H1 (cell line): ENCODE measurements at regions of chr20 and their contacts with region 1.

Region 1: GRCh38 chr20:59403261-59403961 is 103.0 kb downstream of the EDN3 start:
- DNase-seq: peak; percentile 13 to 98
- H3K4me3 ChIP-seq: peak overlapping the region; percentile 27 to 63 (median 58)
- H3K27ac ChIP-seq: no peak overlapping the region
- H3K4me1 ChIP-seq: peaks cover 0 to 8% (median 2%) of the 10 kb centered on the region in 4 experiments; a peak in 5 of 7 replicates
- H3K27me3 ChIP-seq: peaks cover 0 to 22% (median 16%) of the 10 kb centered on the region in 4 experiments; a peak in 6 of 7 replicates
- CTCF ChIP-seq: peak; percentile 92 to 93 (median 93)
- EP300 ChIP-seq: no peak
- POLR2A ChIP-seq: no peak
- RAD21 ChIP-seq: peak; percentile 96 to 98

Region 2: GRCh38 chr20:59087829-59088433 is 315.5 kb before region 1 on chr20:
- CTCF ChIA-PET with region 1: interaction called, 10 read pairs
- POLR2A ChIA-PET with region 1: no interaction called
- DNase-seq: peak; percentile 43 to 92
- H3K4me3 ChIP-seq: no peak overlapping the region
- H3K27ac ChIP-seq: no peak overlapping the region
- H3K4me1 ChIP-seq: no peaks in the 10 kb centered on the region
- H3K27me3 ChIP-seq: 0 out of 7 replicates have a peak, but pooled peaks cover 0 to 2% (median 0%) of the 10 kb centered on the region in 4 experiments
- CTCF ChIP-seq: peak; percentile 78 to 89 (median 79)
- EP300 ChIP-seq: no peak
- POLR2A ChIP-seq: no peak
- RAD21 ChIP-seq: peak; percentile 78 to 87

Region 3: GRCh38 chr20:59222253-59223181 is 180.9 kb before region 1 on chr20:
- CTCF ChIA-PET with region 1: interaction called, 41 read pairs
- POLR2A ChIA-PET with region 1: no interaction called
- DNase-seq: peak; percentile 53 to 97
- H3K4me3 ChIP-seq: peak overlapping the region; percentile 37 to 70 (median 50); a peak in 6 of 8 replicates
- H3K27ac ChIP-seq: no peak overlapping the region
- H3K4me1 ChIP-seq: peaks cover 2 to 6% (median 4%) of the 10 kb centered on the region in 4 experiments
- H3K27me3 ChIP-seq: peaks cover 3 to 22% (median 20%) of the 10 kb centered on the region in 4 experiments
- CTCF ChIP-seq: peak; percentile 74 to 81 (median 79)
- EP300 ChIP-seq: no peak
- POLR2A ChIP-seq: no peak
- RAD21 ChIP-seq: peak; percentile 84 to 87

Region 4: GRCh38 chr20:59392736-59393135 is 10.7 kb before region 1 on chr20:
- CTCF ChIA-PET with region 1: interaction called, 11 read pairs
- POLR2A ChIA-PET with region 1: no interaction called
- DNase-seq: no peak
- H3K4me3 ChIP-seq: no peak overlapping the region
- H3K27ac ChIP-seq: no peak overlapping the region
- H3K4me1 ChIP-seq: no peaks in the 10 kb centered on the region
- H3K27me3 ChIP-seq: no peaks in the 10 kb centered on the region
- CTCF ChIP-seq: no peak
- EP300 ChIP-seq: no peak
- POLR2A ChIP-seq: no peak
- RAD21 ChIP-seq: no peak

Region 5: GRCh38 chr20:59455402-59456341 is 52.3 kb after region 1 on chr20:
- CTCF ChIA-PET with region 1: interaction called, 12 read pairs
- POLR2A ChIA-PET with region 1: no interaction called
- DNase-seq: peak in 1 of 2 experiments; percentile 50
- H3K4me3 ChIP-seq: no peak overlapping the region
- H3K27ac ChIP-seq: no peak overlapping the region
- H3K4me1 ChIP-seq: no peaks in the 10 kb centered on the region; a peak in 3 of 7 replicates
- H3K27me3 ChIP-seq: no peaks in the 10 kb centered on the region
- CTCF ChIP-seq: peak in 2 of 3 experiments; percentile 69 to 73; a peak in 3 of 4 replicates
- EP300 ChIP-seq: no peak
- POLR2A ChIP-seq: no peak
- RAD21 ChIP-seq: peak; percentile 87 to 91

Region 6: DNA sequence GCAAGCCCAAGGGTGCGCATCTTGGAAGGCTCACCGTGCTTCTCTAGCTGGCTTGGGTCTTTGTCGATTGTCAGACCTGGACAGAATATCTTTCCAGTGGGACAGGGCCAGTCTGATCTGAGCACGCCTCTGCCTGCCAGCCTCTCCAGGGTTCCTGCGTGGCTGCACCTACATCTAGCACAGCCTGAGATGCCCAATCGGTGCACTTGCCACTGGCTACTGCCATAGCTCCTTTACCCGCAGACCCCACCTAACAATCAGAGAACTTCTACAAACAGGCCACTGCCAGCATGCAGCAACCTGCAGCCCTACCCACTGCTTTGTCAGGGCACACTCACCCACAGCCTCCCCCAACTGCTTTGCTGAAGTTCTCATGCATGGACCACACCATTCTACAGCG is 144.2 kb after region 1 on chr20:
- CTCF ChIA-PET with region 1: no interaction called
- POLR2A ChIA-PET with region 1: no interaction called
- DNase-seq: no peak
- H3K4me3 ChIP-seq: no peak overlapping the region
- H3K27ac ChIP-seq: no peak overlapping the region
- H3K4me1 ChIP-seq: no peaks in the 10 kb centered on the region
- H3K27me3 ChIP-seq: no peaks in the 10 kb centered on the region
- CTCF ChIP-seq: no peak
- EP300 ChIP-seq: no peak
- POLR2A ChIP-seq: no peak
- RAD21 ChIP-seq: no peak